Activated CD8-positive, alpha-beta T cell treated with anti-CD3 and anti-CD28 coated beads for 36 hours (primary cell): ENCODE measurements at regions of chr6 and their contacts with region 1.

Region 1: DNA sequence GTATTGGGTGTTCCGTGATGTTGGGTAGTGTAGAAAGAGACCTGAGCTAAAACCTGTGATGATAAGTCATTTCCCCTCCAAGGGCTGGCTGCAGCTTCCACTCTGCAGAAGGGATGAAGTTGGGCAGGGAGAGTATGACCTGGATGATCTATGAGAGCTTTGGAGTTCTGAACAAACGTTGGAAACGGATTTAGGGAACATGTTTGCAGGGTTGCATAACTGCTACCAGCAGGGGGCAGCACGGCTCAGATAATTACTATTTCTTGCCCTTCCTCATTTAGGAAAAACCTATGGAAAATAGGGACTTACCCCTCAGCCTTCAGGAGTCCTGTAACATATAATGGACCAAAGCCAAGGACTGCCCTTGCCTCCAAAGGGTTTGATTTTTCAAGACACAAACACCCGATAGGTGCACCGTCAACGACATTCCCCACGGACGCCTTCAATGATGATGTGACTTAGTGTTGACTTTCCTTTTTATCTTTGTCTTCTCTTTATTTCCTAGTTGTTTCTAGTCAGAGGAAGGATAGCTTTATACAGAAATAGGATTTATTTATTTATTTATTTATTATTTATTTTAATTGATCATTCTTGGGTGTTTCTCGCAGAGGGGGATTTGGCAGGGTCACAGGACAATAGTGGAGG is 164.9 kb upstream of the SASH1 start:
- DNase-seq: peak; percentile 47
- ATAC-seq: no peak
- H3K4me3 Mint-ChIP-seq: no peak overlapping the region
- H3K27ac Mint-ChIP-seq: no peak overlapping the region
- H3K4me1 Mint-ChIP-seq: no peaks in the 10 kb centered on the region
- H3K27me3 Mint-ChIP-seq: peaks cover 15% of the 10 kb centered on the region
- CTCF ChIP-seq: peak; percentile 74

Region 2: GRCh38 chr6:147930745-147931144 is 247.0 kb before region 1 on chr6:
- CTCF ChIA-PET with region 1: no interaction called
- POLR2A ChIA-PET with region 1: no interaction called
- intact Hi-C with region 1: no loop called
- DNase-seq: no peak
- ATAC-seq: no peak
- H3K4me3 Mint-ChIP-seq: no peak overlapping the region
- H3K27ac Mint-ChIP-seq: no peak overlapping the region
- H3K4me1 Mint-ChIP-seq: no peaks in the 10 kb centered on the region
- H3K27me3 Mint-ChIP-seq: no peaks in the 10 kb centered on the region
- CTCF ChIP-seq: no peak

Region 3: DNA sequence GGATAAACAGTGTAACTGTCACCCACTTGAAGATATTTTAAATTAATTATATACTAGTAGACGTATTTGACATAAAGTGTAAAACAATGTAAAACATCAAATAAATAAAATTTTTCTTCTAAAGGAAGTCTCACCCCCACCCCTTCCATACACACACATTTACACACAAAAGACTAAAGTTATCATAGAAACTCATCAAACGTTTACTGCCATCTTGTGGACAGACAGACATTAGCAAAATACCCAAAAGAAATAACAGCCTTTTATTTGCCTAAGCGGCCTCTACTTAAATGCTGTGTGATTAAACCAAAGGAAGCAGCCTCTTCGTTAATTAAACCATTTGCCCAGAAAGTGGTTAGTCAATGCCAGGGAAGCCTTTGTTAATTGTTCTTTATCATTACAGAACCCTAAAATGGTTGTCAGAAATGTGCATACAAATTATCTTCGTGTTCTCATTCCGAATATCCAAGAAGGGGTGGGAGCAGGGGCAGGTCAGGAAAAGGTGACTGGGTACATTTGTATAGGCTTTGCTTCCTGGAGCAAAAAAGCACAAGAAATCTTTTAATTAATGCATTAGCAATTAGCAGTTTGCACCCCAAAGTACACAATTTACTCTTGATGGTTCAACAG is 11.3 kb before region 1 on chr6:
- CTCF ChIA-PET with region 1: interaction called, 11 read pairs
- POLR2A ChIA-PET with region 1: no interaction called
- intact Hi-C with region 1: no loop called
- DNase-seq: no peak
- ATAC-seq: no peak
- H3K4me3 Mint-ChIP-seq: no peak overlapping the region
- H3K27ac Mint-ChIP-seq: no peak overlapping the region
- H3K4me1 Mint-ChIP-seq: no peaks in the 10 kb centered on the region
- H3K27me3 Mint-ChIP-seq: peaks cover 6% of the 10 kb centered on the region
- CTCF ChIP-seq: peak; percentile 70

Region 4: DNA sequence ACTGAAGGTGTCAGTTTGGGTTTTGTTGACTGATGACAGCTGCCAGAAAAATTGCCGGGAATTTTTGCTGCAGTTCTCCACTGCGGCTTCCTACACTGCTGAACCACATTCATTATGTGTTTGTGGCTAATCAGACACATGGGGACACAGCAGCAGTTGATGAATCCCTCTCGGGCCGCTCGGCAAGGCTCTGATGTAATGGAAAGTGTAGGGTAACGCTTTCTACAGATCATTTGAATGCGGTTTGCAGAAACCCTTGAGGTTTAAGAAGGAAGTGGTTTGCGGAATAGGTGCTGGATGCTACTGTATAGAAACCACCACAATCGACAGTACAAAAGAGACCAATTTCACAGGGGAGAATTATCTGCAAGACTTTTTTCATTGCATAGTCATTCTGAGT is 26.3 kb after region 1 on chr6:
- CTCF ChIA-PET with region 1: interaction called, 21 read pairs
- POLR2A ChIA-PET with region 1: no interaction called
- intact Hi-C with region 1: no loop called
- DNase-seq: peak; percentile 85
- ATAC-seq: peak; percentile 88
- H3K4me3 Mint-ChIP-seq: peak overlapping the region; percentile 60
- H3K27ac Mint-ChIP-seq: peak overlapping the region; percentile 84
- H3K4me1 Mint-ChIP-seq: peaks cover 26% of the 10 kb centered on the region
- H3K27me3 Mint-ChIP-seq: peaks cover 60% of the 10 kb centered on the region
- CTCF ChIP-seq: no peak

Region 5: GRCh38 chr6:148214667-148215066 is 37.0 kb after region 1 on chr6:
- CTCF ChIA-PET with region 1: no interaction called
- POLR2A ChIA-PET with region 1: no interaction called
- intact Hi-C with region 1: no loop called
- DNase-seq: no peak
- ATAC-seq: no peak
- H3K4me3 Mint-ChIP-seq: no peak overlapping the region
- H3K27ac Mint-ChIP-seq: no peak overlapping the region
- H3K4me1 Mint-ChIP-seq: no peaks in the 10 kb centered on the region
- H3K27me3 Mint-ChIP-seq: peaks cover 51% of the 10 kb centered on the region
- CTCF ChIP-seq: no peak

Region 6: GRCh38 chr6:148250975-148251685 is 73.4 kb after region 1 on chr6:
- CTCF ChIA-PET with region 1: interaction called, 12 read pairs
- POLR2A ChIA-PET with region 1: no interaction called
- intact Hi-C with region 1: loop called (anchors 5 kb)
- DNase-seq: no peak
- ATAC-seq: no peak
- H3K4me3 Mint-ChIP-seq: no peak overlapping the region
- H3K27ac Mint-ChIP-seq: no peak overlapping the region
- H3K4me1 Mint-ChIP-seq: no peaks in the 10 kb centered on the region
- H3K27me3 Mint-ChIP-seq: peaks cover 5% of the 10 kb centered on the region
- CTCF ChIP-seq: no peak

Region 7: DNA sequence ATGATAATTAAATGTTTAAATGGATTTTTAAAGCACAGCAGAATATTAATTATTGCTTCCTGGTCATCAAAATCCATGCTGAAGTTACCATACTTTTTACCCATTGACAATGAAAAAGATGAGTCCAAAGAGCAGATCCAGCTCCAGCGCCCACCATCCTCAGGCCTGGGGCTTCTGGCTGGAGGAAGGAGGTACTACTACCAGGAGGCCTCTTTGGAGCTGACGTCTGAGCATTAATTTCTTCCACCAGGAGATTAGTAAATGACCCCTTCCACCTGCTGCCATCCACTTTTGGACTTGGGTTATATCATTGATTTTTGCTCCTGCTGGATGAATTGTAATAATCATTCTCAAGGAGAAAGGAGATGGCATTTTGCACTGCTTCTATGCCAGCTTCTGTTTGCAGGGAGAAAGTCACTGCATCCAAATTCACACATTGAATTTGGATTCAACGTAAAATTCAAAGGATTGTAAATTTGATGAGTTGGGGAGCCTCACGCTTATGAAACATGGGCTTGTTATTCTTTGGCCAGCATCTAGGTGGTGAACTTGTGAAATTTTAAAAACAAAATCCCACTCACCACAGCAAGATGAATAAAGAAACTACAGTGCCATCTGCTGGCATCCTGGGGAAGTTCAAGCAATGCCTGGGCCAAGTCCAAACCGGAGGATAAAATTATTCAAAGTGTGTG is 286.8 kb after region 1 on chr6:
- CTCF ChIA-PET with region 1: interaction called, 43 read pairs
- POLR2A ChIA-PET with region 1: no interaction called
- intact Hi-C with region 1: no loop called
- DNase-seq: peak; percentile 69
- ATAC-seq: peak; percentile 67
- H3K4me3 Mint-ChIP-seq: no peak overlapping the region
- H3K27ac Mint-ChIP-seq: no peak overlapping the region
- H3K4me1 Mint-ChIP-seq: no peaks in the 10 kb centered on the region
- H3K27me3 Mint-ChIP-seq: peaks cover 8% of the 10 kb centered on the region
- CTCF ChIP-seq: peak; percentile 93